Lower leg skin (tissue), 4 donors: ENCODE measurements at regions of chr3 and their contacts with region 1.

Region 1: GRCh38 chr3:99833617-99834205 is 16.0 kb downstream of the CMSS1 start:
- DNase-seq: no peak
- H3K4me3 ChIP-seq: no peak overlapping the region
- CTCF ChIP-seq: no peak
- POLR2A ChIP-seq: no peak

Region 2: DNA sequence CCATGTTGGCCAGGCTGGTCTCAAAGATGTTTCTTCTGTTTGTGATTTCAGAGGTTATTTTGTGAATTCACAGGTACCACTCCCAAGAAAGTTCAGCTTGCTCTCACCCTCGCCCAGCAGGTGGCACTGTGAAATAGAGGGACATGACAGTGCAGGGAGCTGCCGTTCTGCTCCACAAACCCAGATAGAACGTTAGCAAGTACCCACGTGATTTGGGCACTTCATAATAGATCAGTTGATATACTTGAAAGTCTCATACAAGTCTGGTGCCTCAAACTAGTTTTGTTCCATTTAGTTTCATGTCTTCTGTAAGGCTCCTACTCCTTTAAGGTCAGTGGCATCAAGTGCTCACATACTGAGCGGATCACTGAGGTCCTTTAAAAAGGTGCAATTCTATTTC is 235.1 kb after region 1 on chr3:
- intact Hi-C with region 1: loop called (anchors 10 kb)
- DNase-seq: peak; percentile 77 to 91
- H3K4me3 ChIP-seq: no peak overlapping the region
- CTCF ChIP-seq: no peak
- POLR2A ChIP-seq: no peak

Region 3: DNA sequence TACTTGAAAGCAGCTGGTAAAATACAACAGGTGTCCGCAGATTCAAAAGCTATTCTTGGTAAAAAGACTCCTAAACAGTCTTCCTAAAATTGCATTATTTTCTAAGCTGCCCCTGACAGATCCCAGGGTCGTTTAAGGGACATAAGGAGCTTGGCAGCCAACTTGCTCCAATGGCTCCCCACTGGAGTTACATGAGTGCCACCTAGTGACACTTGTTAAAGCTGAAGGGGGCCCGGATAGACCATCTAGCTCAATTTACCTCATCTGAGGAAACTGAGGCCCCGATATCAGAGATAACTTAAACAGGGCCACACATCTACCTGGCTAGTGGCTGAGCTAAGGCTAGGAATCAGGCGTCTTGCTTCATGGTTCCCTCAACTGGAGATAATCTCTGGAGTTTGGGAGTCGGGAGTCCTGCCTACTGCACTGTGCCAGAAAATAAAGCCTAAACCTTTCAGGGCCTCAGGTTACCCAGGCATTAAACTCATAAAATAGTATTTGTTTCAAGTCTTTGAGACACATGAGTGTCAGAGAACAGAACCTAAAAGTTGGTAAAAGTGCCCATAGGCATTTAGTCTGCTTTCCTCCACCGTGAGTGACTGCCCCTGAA is 420.6 kb after region 1 on chr3:
- intact Hi-C with region 1: loop called (anchors 5 kb)
- DNase-seq: peak in 1 of 2 donors; percentile 37
- H3K4me3 ChIP-seq: no peak overlapping the region
- CTCF ChIP-seq: no peak
- POLR2A ChIP-seq: no peak